ENCODE measurements at regions of chr6 and their contacts with region 1.

Region 1: GRCh38 chr6:80214436-80215022 is 108.1 kb downstream of the BCKDHB start:
- DNase-seq: no peak
- H3K4me3 ChIP-seq: no peak overlapping the region
- H3K27ac ChIP-seq: peak overlapping the region in 1 of 4 donors; percentile 13
- H3K4me1 ChIP-seq: peaks cover 0 to 66% (median 32%) of the 10 kb centered on the region in 4 donors
- H3K27me3 ChIP-seq: no peaks in the 10 kb centered on the region
- CTCF ChIP-seq: peak; percentile 18 to 72 (median 52)
- EP300 ChIP-seq: no peak
- POLR2A ChIP-seq: no peak

Region 2: DNA sequence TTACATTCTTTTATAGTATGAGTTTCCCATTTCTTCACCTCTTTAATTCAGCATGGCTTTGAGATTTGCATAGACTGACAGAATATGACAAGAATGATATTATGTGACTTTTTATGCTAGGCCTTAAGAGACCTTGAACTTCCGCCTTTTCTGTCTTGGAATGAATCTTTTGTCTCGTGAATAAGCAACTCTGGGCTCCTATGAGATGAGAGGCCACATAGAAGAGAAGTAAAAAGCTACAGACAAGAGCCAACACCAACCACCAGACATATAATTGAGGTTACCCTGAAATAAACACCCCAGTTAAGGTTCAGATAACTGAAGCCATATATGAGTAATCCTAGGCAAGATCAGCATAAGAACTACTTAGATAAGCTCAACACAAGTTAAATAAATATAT is 1960.9 kb before region 1 on chr6:
- intact Hi-C with region 1: no loop called
- DNase-seq: no peak
- H3K4me3 ChIP-seq: no peak overlapping the region
- H3K27ac ChIP-seq: no peak overlapping the region
- H3K4me1 ChIP-seq: no peaks in the 10 kb centered on the region
- H3K27me3 ChIP-seq: no peaks in the 10 kb centered on the region
- CTCF ChIP-seq: no peak
- EP300 ChIP-seq: no peak
- POLR2A ChIP-seq: no peak

Region 3: GRCh38 chr6:80133020-80133419 is 81.5 kb before region 1 on chr6:
- intact Hi-C with region 1: loop called (anchors 5 kb)
- DNase-seq: peak; percentile 83
- H3K4me3 ChIP-seq: no peak overlapping the region
- H3K27ac ChIP-seq: no peak overlapping the region
- H3K4me1 ChIP-seq: peaks cover 0 to 23% (median 7%) of the 10 kb centered on the region in 4 donors
- H3K27me3 ChIP-seq: no peaks in the 10 kb centered on the region
- CTCF ChIP-seq: peak; percentile 23 to 64 (median 48)
- EP300 ChIP-seq: no peak
- POLR2A ChIP-seq: no peak

Region 4: GRCh38 chr6:80254716-80255115 is 40.2 kb after region 1 on chr6:
- intact Hi-C with region 1: no loop called
- DNase-seq: no peak
- H3K4me3 ChIP-seq: no peak overlapping the region
- H3K27ac ChIP-seq: no peak overlapping the region
- H3K4me1 ChIP-seq: peaks cover 0 to 13% (median 5%) of the 10 kb centered on the region in 4 donors
- H3K27me3 ChIP-seq: no peaks in the 10 kb centered on the region
- CTCF ChIP-seq: no peak
- EP300 ChIP-seq: no peak
- POLR2A ChIP-seq: no peak

Region 5: GRCh38 chr6:80268865-80269730 is 54.6 kb after region 1 on chr6:
- intact Hi-C with region 1: no loop called
- DNase-seq: no peak
- H3K4me3 ChIP-seq: no peak overlapping the region
- H3K27ac ChIP-seq: no peak overlapping the region
- H3K4me1 ChIP-seq: no peaks in the 10 kb centered on the region
- H3K27me3 ChIP-seq: no peaks in the 10 kb centered on the region
- CTCF ChIP-seq: no peak
- EP300 ChIP-seq: no peak
- POLR2A ChIP-seq: no peak

Region 6: DNA sequence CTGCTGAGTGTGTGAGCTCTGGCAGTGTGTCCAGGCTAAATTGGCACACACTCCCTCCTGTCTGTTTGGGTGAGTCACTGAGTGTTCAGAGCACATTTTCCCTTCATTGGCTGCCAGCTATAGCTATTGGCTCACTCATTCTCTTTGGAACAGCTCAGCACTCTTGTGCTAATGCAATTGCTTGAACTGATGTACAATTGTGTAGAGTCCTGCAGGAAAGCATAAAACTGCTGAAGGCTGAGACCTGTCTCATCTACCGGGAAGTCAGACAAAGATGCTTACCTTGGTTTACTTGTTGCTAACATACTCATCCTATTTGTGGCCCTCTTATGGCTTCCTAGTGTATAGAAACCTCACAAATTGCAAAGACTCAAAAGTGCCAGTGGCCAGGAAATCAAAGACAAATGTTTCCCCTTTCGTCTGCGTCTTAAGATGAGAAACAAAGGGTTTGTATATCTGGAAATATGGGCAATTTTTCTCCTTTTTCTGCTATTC is 243.0 kb after region 1 on chr6:
- intact Hi-C with region 1: loop called (anchors 5 kb)
- DNase-seq: peak; percentile 87
- H3K4me3 ChIP-seq: no peak overlapping the region
- H3K27ac ChIP-seq: no peak overlapping the region
- H3K4me1 ChIP-seq: peaks cover 0 to 17% (median 13%) of the 10 kb centered on the region in 4 donors
- H3K27me3 ChIP-seq: no peaks in the 10 kb centered on the region
- CTCF ChIP-seq: no peak
- EP300 ChIP-seq: no peak
- POLR2A ChIP-seq: no peak

Region 7: GRCh38 chr6:80605165-80605989 is 390.8 kb after region 1 on chr6:
- intact Hi-C with region 1: loop called (anchors 5 kb)
- DNase-seq: no peak
- H3K4me3 ChIP-seq: no peak overlapping the region
- H3K27ac ChIP-seq: no peak overlapping the region
- H3K4me1 ChIP-seq: peaks cover 0 to 20% (median 17%) of the 10 kb centered on the region in 4 donors
- H3K27me3 ChIP-seq: no peaks in the 10 kb centered on the region
- CTCF ChIP-seq: peak in 3 of 4 experiments; percentile 12 to 57 (median 45)
- EP300 ChIP-seq: no peak
- POLR2A ChIP-seq: no peak

Region 8: GRCh38 chr6:81572020-81572419 is 1357.5 kb after region 1 on chr6:
- intact Hi-C with region 1: loop called (anchors 5 kb)
- DNase-seq: peak; percentile 67
- H3K4me3 ChIP-seq: no peak overlapping the region
- H3K27ac ChIP-seq: peak overlapping the region in 3 of 4 donors; percentile 65 to 76 (median 66)
- H3K4me1 ChIP-seq: peaks cover 0 to 52% (median 41%) of the 10 kb centered on the region in 4 donors
- H3K27me3 ChIP-seq: no peaks in the 10 kb centered on the region
- CTCF ChIP-seq: no peak
- EP300 ChIP-seq: peak in 3 of 4 donors; percentile 49 to 87 (median 83)
- POLR2A ChIP-seq: no peak

Measured in sigmoid colon (tissue), 7 donors.